Activated CD4-positive, alpha-beta memory T cell treated with anti-CD3 and anti-CD28 coated beads for 36 hours (primary cell): ENCODE measurements at regions of chr15 and their contacts with region 1.

Region 1: GRCh38 chr15:59688841-59689625 is at the start of gene BNIP2:
- DNase-seq: peak; percentile 98
- H3K4me3 Mint-ChIP-seq: peak within 1 kb of the TSS; percentile 90
- H3K27ac Mint-ChIP-seq: peak within 1 kb of the TSS; percentile 93
- H3K4me1 Mint-ChIP-seq: peaks cover 43% of the 10 kb centered on the region
- H3K27me3 Mint-ChIP-seq: no peaks in the 10 kb centered on the region
- total RNA-seq, gene BNIP2: 55.2 to 58.0 TPM

Region 2: GRCh38 chr15:58987489-58988005 is 701.5 kb before region 1 on chr15 and contains the start of gene RNF111:
- CTCF ChIA-PET with region 1: no interaction called
- POLR2A ChIA-PET with region 1: no interaction called
- intact Hi-C with region 1: loop called (anchors 10 kb)
- DNase-seq: peak; percentile 94
- H3K4me3 Mint-ChIP-seq: peak within 1 kb of the TSS; percentile 96
- H3K27ac Mint-ChIP-seq: peak within 1 kb of the TSS; percentile 87
- H3K4me1 Mint-ChIP-seq: peaks cover 38% of the 10 kb centered on the region
- H3K27me3 Mint-ChIP-seq: no peaks in the 10 kb centered on the region
- total RNA-seq, gene RNF111: 22.6 to 25.0 TPM

Region 3: DNA sequence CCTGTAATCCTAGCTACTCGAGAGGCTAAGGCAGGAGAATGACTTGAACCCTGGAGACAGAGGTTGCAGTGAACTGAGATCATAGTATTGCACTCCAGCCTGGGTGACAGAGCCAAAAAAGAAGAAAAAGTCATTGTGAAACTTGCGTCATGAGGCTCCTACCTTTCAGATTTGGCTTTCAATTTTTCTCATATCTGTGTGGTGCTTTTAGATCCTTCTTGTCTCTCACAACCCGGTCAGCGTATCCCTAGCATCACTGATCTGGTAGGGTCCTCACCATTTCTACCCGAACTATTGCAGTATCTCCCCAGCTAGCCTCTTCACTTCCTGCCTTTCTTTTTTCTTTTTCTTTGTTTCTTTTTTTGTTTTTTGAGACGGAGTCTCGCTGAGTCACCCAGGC is 99.0 kb before region 1 on chr15:
- CTCF ChIA-PET with region 1: no interaction called
- POLR2A ChIA-PET with region 1: no interaction called
- intact Hi-C with region 1: loop called (anchors 1 kb)
- DNase-seq: peak; percentile 48
- H3K4me3 Mint-ChIP-seq: peak overlapping the region; percentile 69
- H3K27ac Mint-ChIP-seq: peak overlapping the region; percentile 89
- H3K4me1 Mint-ChIP-seq: peaks cover 30% of the 10 kb centered on the region
- H3K27me3 Mint-ChIP-seq: peaks cover 13% of the 10 kb centered on the region

Region 4: DNA sequence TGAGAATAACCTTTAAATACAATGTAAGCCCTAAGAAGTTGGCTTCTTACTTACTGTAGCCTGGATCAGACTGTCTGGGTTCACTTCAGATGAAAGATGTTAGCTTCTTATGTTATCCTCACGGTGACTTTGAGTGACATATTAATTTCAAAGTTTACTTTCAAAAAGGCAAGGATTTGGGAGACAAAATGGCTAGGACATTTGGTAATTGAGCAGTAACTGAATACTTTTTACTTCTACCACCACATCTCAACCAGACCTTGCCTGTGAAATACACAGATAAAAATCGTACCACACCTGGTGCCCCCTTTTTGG is 36.1 kb after region 1 on chr15:
- CTCF ChIA-PET with region 1: interaction called, 15 read pairs
- POLR2A ChIA-PET with region 1: no interaction called
- intact Hi-C with region 1: no loop called
- DNase-seq: no peak
- H3K4me3 Mint-ChIP-seq: no peak overlapping the region
- H3K27ac Mint-ChIP-seq: no peak overlapping the region
- H3K4me1 Mint-ChIP-seq: no peaks in the 10 kb centered on the region
- H3K27me3 Mint-ChIP-seq: peaks cover 7% of the 10 kb centered on the region

Region 5: DNA sequence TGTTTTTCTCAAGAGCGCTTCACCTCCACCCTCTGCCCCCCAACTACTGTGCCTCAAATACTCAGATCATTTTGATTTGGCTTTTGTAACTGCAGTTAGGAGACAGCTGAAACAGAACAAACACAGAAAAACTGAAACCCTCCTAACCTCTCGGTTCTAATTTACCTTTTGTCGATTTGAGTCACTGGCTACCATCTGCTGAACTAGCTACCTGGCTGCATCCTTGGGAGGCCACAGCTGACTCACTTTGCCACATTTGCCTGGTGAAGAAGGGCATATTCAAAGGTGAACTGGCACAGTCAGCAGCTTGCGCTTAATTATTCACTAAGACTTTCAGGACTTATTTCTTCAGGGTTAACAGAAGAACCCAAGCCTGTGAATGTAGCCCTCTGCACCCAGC is 432.8 kb after region 1 on chr15:
- CTCF ChIA-PET with region 1: no interaction called
- POLR2A ChIA-PET with region 1: no interaction called
- intact Hi-C with region 1: loop called (anchors 5 kb)
- DNase-seq: peak; percentile 84
- H3K4me3 Mint-ChIP-seq: peak overlapping the region; percentile 40
- H3K27ac Mint-ChIP-seq: peak overlapping the region; percentile 60
- H3K4me1 Mint-ChIP-seq: peaks cover 58% of the 10 kb centered on the region
- H3K27me3 Mint-ChIP-seq: peaks cover 1% of the 10 kb centered on the region

Region 6: DNA sequence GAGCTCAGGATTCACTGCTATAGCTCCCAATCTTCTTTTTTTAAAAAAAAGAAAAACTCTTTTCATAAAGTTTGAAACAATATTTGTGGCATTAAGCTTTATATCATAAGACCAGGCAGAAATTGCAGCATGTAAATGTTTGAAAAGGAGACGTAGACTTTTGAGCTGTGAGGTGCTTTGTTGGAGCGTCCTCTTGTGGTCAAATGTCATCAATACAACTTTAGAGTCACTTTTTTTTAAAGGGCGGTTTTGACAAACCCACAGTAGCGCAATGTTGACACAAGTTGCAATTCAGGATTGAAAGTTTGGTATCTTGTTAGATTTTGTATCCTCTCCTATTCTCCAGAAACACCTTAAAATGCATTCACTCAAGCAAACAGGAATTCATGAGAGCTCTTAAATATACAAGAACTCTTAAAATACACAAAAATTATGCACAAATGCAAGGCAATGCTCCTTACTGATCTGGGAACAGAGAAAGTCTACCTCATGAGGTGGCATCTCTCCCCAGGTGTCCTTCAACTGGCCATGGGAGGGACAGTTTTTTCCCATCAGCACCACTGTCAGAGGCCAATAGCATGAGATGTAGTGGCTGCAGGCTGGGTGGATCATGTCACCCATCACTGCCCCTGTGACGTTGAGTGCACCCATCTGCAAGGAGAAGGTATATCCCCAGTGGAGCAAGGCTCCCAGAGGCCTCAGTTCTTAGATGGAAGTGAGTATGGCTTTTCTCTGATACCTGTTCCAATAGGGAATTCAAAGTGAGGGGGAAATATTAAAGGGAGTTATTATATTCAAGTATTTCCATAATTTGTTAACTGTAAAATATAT is 638.0 kb after region 1 on chr15:
- CTCF ChIA-PET with region 1: interaction called, 15 read pairs
- POLR2A ChIA-PET with region 1: no interaction called
- intact Hi-C with region 1: loop called (anchors 1 kb)
- DNase-seq: peak; percentile 23
- H3K4me3 Mint-ChIP-seq: no peak overlapping the region
- H3K27ac Mint-ChIP-seq: no peak overlapping the region
- H3K4me1 Mint-ChIP-seq: peaks cover 2% of the 10 kb centered on the region
- H3K27me3 Mint-ChIP-seq: peaks cover 35% of the 10 kb centered on the region